HCT116 (cell line): ENCODE measurements at regions of chr6 and their contacts with region 1.

Region 1: DNA sequence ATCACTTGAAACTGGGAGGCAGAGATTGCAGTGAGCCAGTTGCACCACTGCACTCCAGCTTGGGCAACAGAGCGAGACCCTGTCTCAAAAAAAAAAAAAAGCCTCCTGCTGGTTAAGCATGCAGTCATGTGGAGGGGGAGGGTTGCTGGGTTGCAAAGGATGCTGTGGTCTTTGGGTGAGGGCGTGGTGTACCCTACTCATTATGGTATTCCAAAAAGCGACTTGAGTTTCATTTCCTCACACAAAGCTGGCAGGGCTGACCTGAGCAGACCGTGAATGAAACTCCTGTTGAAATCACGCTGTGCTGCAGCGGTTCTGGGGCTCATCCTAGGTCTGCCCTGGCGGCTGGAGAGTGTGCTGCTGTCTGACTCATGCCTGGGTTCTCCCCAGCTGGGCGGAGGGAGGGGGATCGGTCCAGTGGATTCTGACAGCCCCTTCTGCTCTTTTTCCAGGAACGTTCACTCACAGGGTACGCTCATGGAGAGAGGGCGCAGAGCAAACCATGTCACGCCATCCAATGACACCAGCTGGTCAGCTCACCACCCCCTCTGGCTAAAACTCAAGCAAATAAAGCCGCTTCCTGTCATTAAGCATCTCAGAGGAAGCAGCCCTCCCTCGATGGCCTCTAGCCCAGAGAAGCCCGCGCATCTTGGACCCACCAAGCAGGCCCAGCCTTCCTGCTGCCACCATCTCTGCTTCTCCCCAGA is 166.2 kb downstream of the SCML4 start:
- DNase-seq: no peak
- ATAC-seq: no peak
- H3K4me3 ChIP-seq: no peak overlapping the region
- H3K27ac ChIP-seq: no peak overlapping the region
- H3K4me1 ChIP-seq: peaks cover 0 to 13% of the 10 kb centered on the region in 2 experiments; a peak in 2 of 4 replicates
- H3K27me3 ChIP-seq: no peaks in the 10 kb centered on the region
- CTCF ChIP-seq: no peak
- POLR2A ChIP-seq: no peak
- RAD21 ChIP-seq: no peak

Region 2: GRCh38 chr6:107132330-107132954 is 525.5 kb before region 1 on chr6:
- CTCF ChIA-PET with region 1: no interaction called
- POLR2A ChIA-PET with region 1: no interaction called
- RAD21 ChIA-PET with region 1: no interaction called
- intact Hi-C with region 1: loop called (anchors 1 kb)
- DNase-seq: peak; percentile 19
- ATAC-seq: peak; percentile 50; the same call in 1 of the 2 replicates
- H3K4me3 ChIP-seq: no peak overlapping the region
- H3K27ac ChIP-seq: no peak overlapping the region
- H3K4me1 ChIP-seq: peaks cover 5 to 8% of the 10 kb centered on the region in 2 experiments; a peak in 3 of 4 replicates
- H3K27me3 ChIP-seq: no peaks in the 10 kb centered on the region
- CTCF ChIP-seq: peak; percentile 41 to 61 (median 49)
- POLR2A ChIP-seq: no peak
- RAD21 ChIP-seq: peak; percentile 67

Region 3: DNA sequence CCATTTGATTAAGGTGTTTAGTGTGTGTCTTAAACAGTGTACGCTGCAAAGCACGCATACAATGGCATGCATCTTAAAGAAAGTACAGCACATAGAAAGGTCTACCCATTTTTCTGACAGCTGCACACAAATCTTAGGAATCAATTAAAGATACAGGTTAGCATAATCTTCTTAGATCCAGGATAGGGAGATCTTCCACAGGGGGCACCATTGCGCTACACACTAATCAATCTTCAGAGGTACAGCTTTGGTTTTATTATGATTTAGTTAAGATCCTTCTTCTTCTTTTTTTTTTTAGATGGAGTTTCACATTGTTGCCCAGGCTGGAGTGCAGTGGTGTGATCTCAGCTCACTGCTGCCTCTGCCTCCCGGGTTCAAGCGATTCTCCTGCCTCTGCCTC is 478.9 kb before region 1 on chr6:
- CTCF ChIA-PET with region 1: interaction called, 6 read pairs
- POLR2A ChIA-PET with region 1: no interaction called
- RAD21 ChIA-PET with region 1: no interaction called
- intact Hi-C with region 1: loop called (anchors 5 kb)
- DNase-seq: peak; percentile 7
- ATAC-seq: peak; percentile 55; the same call in 1 of the 2 replicates
- H3K4me3 ChIP-seq: no peak overlapping the region
- H3K27ac ChIP-seq: no peak overlapping the region
- H3K4me1 ChIP-seq: no peaks in the 10 kb centered on the region
- H3K27me3 ChIP-seq: no peaks in the 10 kb centered on the region
- CTCF ChIP-seq: peak; percentile 32 to 50 (median 32); a peak in 4 of 6 replicates
- POLR2A ChIP-seq: no peak
- RAD21 ChIP-seq: peak; percentile 57

Region 4: DNA sequence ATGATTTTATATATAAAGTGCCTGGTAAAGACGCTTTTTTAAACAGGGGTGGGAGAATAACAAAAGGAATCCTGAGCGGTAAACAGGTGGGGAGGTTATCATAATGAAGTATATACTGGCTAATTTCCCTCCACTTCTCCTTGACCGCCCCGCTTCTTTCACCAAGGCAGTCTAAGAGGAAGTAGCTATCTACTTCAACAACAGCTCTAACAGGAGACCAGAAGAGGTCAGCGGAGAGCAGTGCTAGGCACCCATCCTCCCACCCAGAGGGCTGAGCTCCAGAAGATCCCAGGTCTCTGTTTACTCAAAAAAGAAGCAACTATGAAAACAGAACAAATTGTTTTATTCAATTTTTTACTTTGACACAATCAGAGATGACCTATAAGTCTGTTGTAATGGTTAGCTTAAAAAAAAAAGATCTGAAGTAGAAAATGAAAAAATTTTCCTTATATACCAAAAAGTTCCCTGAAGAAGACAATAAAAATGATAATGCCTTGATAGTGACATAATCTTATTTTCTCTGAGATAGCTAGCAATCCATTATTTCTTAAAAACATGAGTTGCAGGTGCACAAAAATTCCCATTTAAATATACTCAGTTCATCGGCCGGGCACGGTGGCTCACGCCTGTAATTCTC is 339.7 kb before region 1 on chr6:
- CTCF ChIA-PET with region 1: interaction called, 10 read pairs
- POLR2A ChIA-PET with region 1: no interaction called
- RAD21 ChIA-PET with region 1: no interaction called
- intact Hi-C with region 1: loop called (anchors 5 kb)
- DNase-seq: peak; percentile 26
- ATAC-seq: peak; percentile 100
- H3K4me3 ChIP-seq: no peak overlapping the region
- H3K27ac ChIP-seq: no peak overlapping the region
- H3K4me1 ChIP-seq: no peaks in the 10 kb centered on the region
- H3K27me3 ChIP-seq: no peaks in the 10 kb centered on the region
- CTCF ChIP-seq: peak; percentile 59 to 87 (median 73); a peak in 5 of 6 replicates
- POLR2A ChIP-seq: no peak
- RAD21 ChIP-seq: peak; percentile 73